Activated CD8-positive, alpha-beta T cell treated with anti-CD3 and anti-CD28 coated beads, Interleukin-2, amount 10 ng/mL, durations not matched to agents 7 days and 5 days (primary cell): ENCODE measurements at regions of chr16 and their contacts with region 1.

Region 1: GRCh38 chr16:84738255-84739038 is 38.6 kb downstream of the USP10 start:
- DNase-seq: peak; percentile 86
- ATAC-seq: peak; percentile 86
- H3K4me3 Mint-ChIP-seq: no peak overlapping the region
- H3K27ac Mint-ChIP-seq: no peak overlapping the region
- H3K4me1 Mint-ChIP-seq: peaks cover 59% of the 10 kb centered on the region
- H3K27me3 Mint-ChIP-seq: no peaks in the 10 kb centered on the region

Region 2: GRCh38 chr16:84511180-84511824 is 227.1 kb before region 1 on chr16:
- CTCF ChIA-PET with region 1: interaction called, 24 read pairs
- POLR2A ChIA-PET with region 1: no interaction called
- DNase-seq: peak; percentile 89
- ATAC-seq: no peak
- H3K4me3 Mint-ChIP-seq: peak overlapping the region; percentile 55
- H3K27ac Mint-ChIP-seq: peak overlapping the region; percentile 88
- H3K4me1 Mint-ChIP-seq: peaks cover 91% of the 10 kb centered on the region
- H3K27me3 Mint-ChIP-seq: no peaks in the 10 kb centered on the region

Region 3: DNA sequence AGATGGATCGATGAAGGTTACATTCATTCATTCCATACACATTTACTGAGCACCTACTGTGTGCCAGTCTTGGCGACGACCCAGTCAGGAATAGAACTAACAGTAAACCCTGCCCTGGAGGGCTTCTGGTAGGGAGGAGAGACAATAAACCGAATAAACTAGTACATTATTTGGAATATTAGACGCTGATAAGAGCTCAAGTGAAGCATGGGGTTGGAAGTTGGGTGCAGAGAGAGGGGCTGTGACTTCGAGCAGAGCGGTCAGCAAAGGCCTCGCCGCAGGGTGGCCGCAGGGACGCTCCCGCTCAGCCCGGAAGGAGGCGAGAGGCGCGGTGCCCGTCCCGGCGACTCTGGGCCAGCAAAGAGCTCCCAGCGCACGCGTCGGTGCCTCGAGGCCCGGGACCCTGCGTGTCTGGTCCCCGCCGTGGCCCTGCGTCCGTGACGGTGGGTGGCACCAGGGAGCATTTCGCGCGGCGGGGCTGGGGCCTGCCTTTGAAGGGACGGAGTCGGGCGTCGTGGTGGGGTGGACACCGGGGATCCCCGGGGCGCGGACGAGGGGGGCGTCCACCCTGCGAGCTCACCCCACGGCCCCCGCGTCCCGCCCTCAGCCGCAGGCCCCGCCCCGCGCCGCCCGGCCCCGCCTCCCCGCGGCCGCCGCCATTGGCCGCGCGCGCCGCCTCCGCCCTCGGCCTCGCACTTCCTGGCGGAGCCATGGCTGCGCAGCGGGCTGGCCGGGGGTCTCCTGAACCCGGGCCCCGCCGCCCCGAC is 90.4 kb before region 1 on chr16 and contains the start of gene KLHL36:
- CTCF ChIA-PET with region 1: interaction called, 10 read pairs
- POLR2A ChIA-PET with region 1: no interaction called
- DNase-seq: peak; percentile 66
- ATAC-seq: peak; percentile 84
- H3K4me3 Mint-ChIP-seq: peak within 1 kb of the TSS; percentile 72
- H3K27ac Mint-ChIP-seq: peak within 1 kb of the TSS; percentile 71
- H3K4me1 Mint-ChIP-seq: peaks cover 40% of the 10 kb centered on the region
- H3K27me3 Mint-ChIP-seq: peaks cover 19% of the 10 kb centered on the region
- total RNA-seq, gene KLHL36: 31.4 to 32.6 TPM

Region 4: GRCh38 chr16:84714028-84714427 is 24.4 kb before region 1 on chr16:
- CTCF ChIA-PET with region 1: interaction called, 226 read pairs
- POLR2A ChIA-PET with region 1: no interaction called
- DNase-seq: no peak
- ATAC-seq: no peak
- H3K4me3 Mint-ChIP-seq: no peak overlapping the region
- H3K27ac Mint-ChIP-seq: no peak overlapping the region
- H3K4me1 Mint-ChIP-seq: peaks cover 24% of the 10 kb centered on the region
- H3K27me3 Mint-ChIP-seq: no peaks in the 10 kb centered on the region

Region 5: DNA sequence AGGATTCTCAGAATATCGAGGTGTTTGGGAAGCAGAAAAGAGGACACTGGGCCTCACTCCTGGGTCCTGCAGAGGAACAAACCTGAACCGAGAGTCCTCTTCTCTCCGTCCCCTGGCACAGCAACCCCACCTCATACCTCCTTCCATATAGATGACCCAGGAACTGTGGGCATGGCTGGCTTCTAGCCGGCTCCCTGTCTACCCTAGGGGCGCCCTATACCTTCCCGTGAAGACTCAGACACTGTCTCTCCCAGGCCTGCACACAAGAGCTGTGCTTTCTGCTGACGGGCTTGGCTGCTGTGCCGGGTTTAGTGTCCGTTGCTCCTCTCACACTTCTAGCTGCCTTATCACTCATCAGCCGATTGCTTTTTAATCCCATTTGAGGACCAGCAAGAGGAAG is 34.9 kb after region 1 on chr16:
- CTCF ChIA-PET with region 1: interaction called, 11 read pairs
- POLR2A ChIA-PET with region 1: no interaction called
- DNase-seq: no peak
- ATAC-seq: no peak
- H3K4me3 Mint-ChIP-seq: no peak overlapping the region
- H3K27ac Mint-ChIP-seq: no peak overlapping the region
- H3K4me1 Mint-ChIP-seq: peaks cover 12% of the 10 kb centered on the region
- H3K27me3 Mint-ChIP-seq: no peaks in the 10 kb centered on the region